ENCODE measurements at regions of chr12 and their contacts with region 1.

Region 1: DNA sequence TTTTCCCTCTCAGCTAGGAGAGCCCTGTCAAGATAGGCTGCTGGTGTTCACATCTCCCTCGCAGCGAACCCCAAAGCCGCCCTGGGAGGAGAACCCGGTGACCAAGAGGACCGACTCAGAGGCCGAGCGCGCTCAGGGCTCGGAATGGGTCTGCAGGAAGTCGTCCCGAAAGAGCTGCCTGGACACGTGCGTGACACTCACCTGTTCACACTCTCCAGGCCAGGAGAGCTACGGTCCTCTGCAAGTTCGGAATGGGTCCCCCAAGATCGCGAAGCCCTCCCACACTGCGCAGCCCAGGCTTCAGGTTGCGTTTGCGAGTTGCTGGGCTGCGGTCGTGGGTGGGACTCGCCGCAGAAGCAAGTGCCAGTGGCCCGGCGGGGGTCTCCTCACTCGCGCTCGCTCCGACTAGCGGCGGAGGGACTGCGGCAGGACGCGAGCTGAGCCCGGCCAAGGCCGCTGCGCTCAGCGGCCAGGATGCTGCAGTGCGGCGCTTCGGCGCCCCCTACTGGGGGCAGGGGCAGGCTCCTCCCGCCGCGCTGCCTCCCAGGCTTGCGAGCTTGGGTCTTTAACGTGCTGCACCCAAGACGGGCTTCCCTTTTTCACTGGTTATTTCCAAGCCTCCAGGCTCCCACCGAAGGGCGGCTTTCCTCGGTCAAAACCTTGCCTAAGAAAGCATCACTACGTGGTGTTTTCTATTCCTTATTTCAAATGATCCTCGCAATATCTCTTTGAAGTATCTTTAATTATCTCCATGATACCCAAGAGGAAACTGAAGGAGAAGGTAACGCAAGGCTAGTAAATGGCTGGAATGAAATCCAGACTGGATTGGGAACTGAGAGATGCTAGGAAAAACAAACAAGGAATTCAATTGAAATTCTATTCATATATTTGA is at the start of gene RERG:
- DNase-seq: peak; percentile 42 to 74 (median 70)
- H3K4me3 ChIP-seq: peak within 1 kb of the TSS in 1 of 2 donors; percentile 27
- H3K4me3 Mint-ChIP-seq: peak within 1 kb of the TSS; percentile 60 to 83 (median 74)
- H3K27ac ChIP-seq: no peak within 1 kb of the TSS
- H3K27ac Mint-ChIP-seq: no peak within 1 kb of the TSS
- H3K4me1 ChIP-seq: peaks cover 10% of the 10 kb centered on the region
- H3K4me1 Mint-ChIP-seq: peaks cover 2 to 14% (median 8%) of the 10 kb centered on the region in 4 donors
- H3K27me3 ChIP-seq: peaks cover 6% of the 10 kb centered on the region
- H3K27me3 Mint-ChIP-seq: peaks cover 21 to 28% of the 10 kb centered on the region in 2 donors
- total RNA-seq, gene RERG: not detected

Region 2: GRCh38 chr12:14723763-14724162 is 497.5 kb before region 1 on chr12:
- CTCF ChIA-PET with region 1: interaction called, 27 read pairs
- POLR2A ChIA-PET with region 1: no interaction called
- intact Hi-C with region 1: loop called (anchors 1 kb)
- DNase-seq: peak; percentile 49 to 66 (median 62)
- H3K4me3 ChIP-seq: no peak overlapping the region
- H3K4me3 Mint-ChIP-seq: no peak overlapping the region
- H3K27ac ChIP-seq: no peak overlapping the region
- H3K27ac Mint-ChIP-seq: peak overlapping the region in 1 of 7 donors; percentile 15
- H3K4me1 ChIP-seq: no peaks in the 10 kb centered on the region
- H3K4me1 Mint-ChIP-seq: peaks cover 0 to 3% (median 1%) of the 10 kb centered on the region in 4 donors
- H3K27me3 ChIP-seq: no peaks in the 10 kb centered on the region
- H3K27me3 Mint-ChIP-seq: peaks cover 5 to 6% of the 10 kb centered on the region in 2 donors

Region 3: DNA sequence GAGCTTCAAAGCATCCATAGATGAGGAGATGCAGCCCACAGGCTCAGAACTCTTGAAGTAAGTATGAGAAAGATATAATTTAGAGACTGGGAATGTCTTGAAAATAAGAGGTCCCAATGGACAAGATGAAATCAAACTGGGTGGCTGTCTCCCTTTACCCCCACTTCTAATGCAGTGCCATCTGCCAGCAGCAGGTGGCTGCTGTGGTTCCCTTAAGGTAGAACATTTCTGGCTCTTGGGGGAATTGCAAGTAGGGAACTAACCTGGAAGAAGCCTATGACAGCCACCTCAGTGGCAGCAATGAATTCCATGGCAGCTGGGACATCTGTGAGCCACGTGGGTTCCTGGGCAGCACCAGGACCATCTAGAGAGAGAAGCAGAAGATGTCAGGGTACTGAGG is 283.6 kb before region 1 on chr12:
- CTCF ChIA-PET with region 1: no interaction called
- POLR2A ChIA-PET with region 1: no interaction called
- intact Hi-C with region 1: loop called (anchors 5 kb)
- DNase-seq: peak in 1 of 5 donors; percentile 45
- H3K4me3 ChIP-seq: no peak overlapping the region
- H3K4me3 Mint-ChIP-seq: peak overlapping the region in 3 of 8 donors; percentile 7 to 20 (median 13)
- H3K27ac ChIP-seq: no peak overlapping the region
- H3K27ac Mint-ChIP-seq: peak overlapping the region; percentile 6 to 82 (median 65)
- H3K4me1 ChIP-seq: peaks cover 24% of the 10 kb centered on the region
- H3K4me1 Mint-ChIP-seq: peaks cover 33 to 59% (median 48%) of the 10 kb centered on the region in 4 donors
- H3K27me3 ChIP-seq: no peaks in the 10 kb centered on the region
- H3K27me3 Mint-ChIP-seq: no peaks in the 10 kb centered on the region

Region 4: DNA sequence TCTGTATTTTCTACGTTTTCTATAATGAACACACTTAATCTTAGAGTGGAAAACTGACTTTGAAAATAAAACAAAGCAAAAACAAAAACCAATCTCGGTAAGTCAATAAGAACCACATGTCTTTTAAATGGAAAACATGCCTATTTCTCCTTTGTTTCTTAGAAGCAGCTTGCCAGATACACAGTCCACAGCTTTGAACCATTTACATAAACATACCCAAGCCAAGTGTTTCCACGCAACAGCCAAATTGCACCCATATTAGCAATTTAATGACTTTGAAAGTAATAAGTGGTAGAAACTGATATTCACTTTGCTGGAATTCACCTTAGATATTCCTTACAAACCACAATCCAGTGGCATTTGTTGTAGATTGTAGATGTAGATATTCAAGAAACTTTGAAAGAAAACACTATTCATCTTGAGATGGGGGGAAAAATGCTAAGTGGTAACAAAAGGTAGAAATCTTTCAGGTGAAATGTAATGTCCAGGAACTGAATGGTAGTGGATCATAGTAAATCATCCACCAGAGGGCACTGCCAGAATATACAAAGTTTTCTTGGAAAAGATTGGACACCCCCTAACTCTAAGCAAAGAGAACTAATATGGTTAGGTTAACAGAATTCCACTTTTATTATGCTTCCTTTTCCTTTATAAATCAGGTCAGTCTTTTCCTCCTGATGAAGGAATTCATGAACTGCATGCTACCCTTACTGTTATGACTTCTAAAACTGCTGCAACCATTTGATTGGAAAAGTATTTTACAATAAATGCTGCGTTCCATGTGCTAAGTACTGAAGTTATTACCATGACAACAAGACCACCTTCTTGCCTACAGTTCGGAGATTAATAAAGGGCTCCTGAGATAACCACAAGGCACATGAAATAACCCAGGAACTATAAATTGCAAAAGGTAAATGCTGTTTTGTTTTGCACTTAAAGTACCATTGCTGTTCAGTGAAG is 69.8 kb before region 1 on chr12:
- CTCF ChIA-PET with region 1: interaction called, 6 read pairs
- POLR2A ChIA-PET with region 1: no interaction called
- intact Hi-C with region 1: loop called (anchors 1 kb)
- DNase-seq: peak in 1 of 5 donors; percentile 1
- H3K4me3 ChIP-seq: no peak overlapping the region
- H3K4me3 Mint-ChIP-seq: no peak overlapping the region
- H3K27ac ChIP-seq: no peak overlapping the region
- H3K27ac Mint-ChIP-seq: no peak overlapping the region
- H3K4me1 ChIP-seq: no peaks in the 10 kb centered on the region
- H3K4me1 Mint-ChIP-seq: no peaks in the 10 kb centered on the region
- H3K27me3 ChIP-seq: no peaks in the 10 kb centered on the region
- H3K27me3 Mint-ChIP-seq: peaks cover 5 to 13% of the 10 kb centered on the region in 2 donors

Region 5: GRCh38 chr12:15181017-15181683 is 40.1 kb before region 1 on chr12:
- CTCF ChIA-PET with region 1: no interaction called
- POLR2A ChIA-PET with region 1: no interaction called
- intact Hi-C with region 1: no loop called
- DNase-seq: no peak
- H3K4me3 ChIP-seq: no peak overlapping the region
- H3K4me3 Mint-ChIP-seq: no peak overlapping the region
- H3K27ac ChIP-seq: no peak overlapping the region
- H3K27ac Mint-ChIP-seq: no peak overlapping the region
- H3K4me1 ChIP-seq: no peaks in the 10 kb centered on the region
- H3K4me1 Mint-ChIP-seq: peaks cover 0 to 2% (median 0%) of the 10 kb centered on the region in 4 donors
- H3K27me3 ChIP-seq: no peaks in the 10 kb centered on the region
- H3K27me3 Mint-ChIP-seq: peaks cover 12 to 13% of the 10 kb centered on the region in 2 donors

Region 6: GRCh38 chr12:15205341-15206010 is 15.8 kb before region 1 on chr12:
- CTCF ChIA-PET with region 1: interaction called, 14 read pairs
- POLR2A ChIA-PET with region 1: no interaction called
- intact Hi-C with region 1: no loop called
- DNase-seq: no peak
- H3K4me3 ChIP-seq: no peak overlapping the region
- H3K4me3 Mint-ChIP-seq: no peak overlapping the region
- H3K27ac ChIP-seq: no peak overlapping the region
- H3K27ac Mint-ChIP-seq: no peak overlapping the region
- H3K4me1 ChIP-seq: no peaks in the 10 kb centered on the region
- H3K4me1 Mint-ChIP-seq: no peaks in the 10 kb centered on the region
- H3K27me3 ChIP-seq: no peaks in the 10 kb centered on the region
- H3K27me3 Mint-ChIP-seq: peaks cover 2 to 9% of the 10 kb centered on the region in 2 donors